ENCODE measurements at regions of chr3 and their contacts with region 1.

Region 1: GRCh38 chr3:156151824-156152428 is 31.5 kb downstream of the KCNAB1 start:
- DNase-seq: peak; percentile 79
- H3K4me3 ChIP-seq: no peak overlapping the region
- H3K27ac ChIP-seq: no peak overlapping the region
- H3K4me1 ChIP-seq: no peaks in the 10 kb centered on the region
- H3K27me3 ChIP-seq: no peaks in the 10 kb centered on the region
- CTCF ChIP-seq: peak; percentile 52 to 87 (median 78)
- POLR2A ChIP-seq: no peak

Region 2: GRCh38 chr3:156509189-156510174 is 357.6 kb after region 1 on chr3:
- intact Hi-C with region 1: loop called (anchors 5 kb)
- DNase-seq: no peak
- H3K4me3 ChIP-seq: no peak overlapping the region
- H3K27ac ChIP-seq: no peak overlapping the region
- H3K4me1 ChIP-seq: peaks cover 0 to 9% of the 10 kb centered on the region in 2 donors
- H3K27me3 ChIP-seq: no peaks in the 10 kb centered on the region
- CTCF ChIP-seq: peak in 5 of 6 experiments; percentile 45 to 75 (median 59)
- POLR2A ChIP-seq: no peak

Measured in thyroid gland (tissue), 4 donors.